GM18951 (cell line): ENCODE measurements at regions of chr1 and their contacts with region 1.

Region 1: GRCh38 chr1:76154206-76154956 is 79.8 kb downstream of the ST6GALNAC3 start:
- POLR2A ChIP-seq: no peak

Region 2: DNA sequence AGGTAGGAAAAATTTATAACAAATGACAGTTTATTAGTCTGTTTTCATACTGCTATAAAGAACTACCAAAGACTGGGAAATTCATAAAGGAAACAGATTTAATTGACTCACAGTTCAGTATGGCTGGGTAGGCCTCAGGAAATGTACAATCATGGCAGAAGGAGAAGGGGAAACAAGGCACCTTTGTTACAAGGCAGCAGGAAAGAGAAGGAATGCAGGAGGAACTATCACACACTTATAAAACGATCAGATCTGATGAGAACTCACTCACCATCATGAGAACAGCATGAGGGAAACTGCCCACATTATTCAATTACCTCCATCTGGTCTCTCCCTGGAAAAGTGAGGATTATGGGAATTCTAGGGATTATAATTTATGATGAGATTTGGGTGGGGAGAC is 283.4 kb before region 1 on chr1:
- in situ Hi-C with region 1: no loop called
- POLR2A ChIP-seq: no peak

Region 3: DNA sequence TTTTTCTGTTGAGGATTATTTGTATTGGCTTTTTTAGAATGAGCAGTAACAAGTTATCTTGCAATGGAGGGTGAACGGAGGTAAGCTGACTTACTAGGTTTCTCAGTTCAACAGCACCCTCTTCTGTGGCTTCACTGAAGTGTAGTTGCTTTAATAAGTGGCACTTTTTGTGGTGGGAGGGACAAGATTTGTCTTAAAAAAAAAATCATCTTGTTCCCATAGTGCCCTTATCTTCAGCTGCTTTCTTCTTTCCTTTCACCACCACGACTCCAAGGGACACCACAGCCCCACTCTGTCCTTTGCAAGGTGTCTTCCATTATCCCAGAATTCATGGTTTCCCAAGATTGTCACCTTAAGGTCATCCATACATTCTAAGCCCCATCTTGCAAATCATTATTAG is 971.9 kb after region 1 on chr1:
- in situ Hi-C with region 1: loop called (anchors 25 kb)
- POLR2A ChIP-seq: no peak